Activated CD4-positive, alpha-beta T cell treated with anti-CD3 and anti-CD28 coated beads for 36 hours (primary cell): ENCODE measurements at regions of chr19 and their contacts with region 1.

Region 1: GRCh38 chr19:10251792-10252694 is at the start of gene MRPL4:
- DNase-seq: peak; percentile 97
- ATAC-seq: peak; percentile 99
- H3K4me3 Mint-ChIP-seq: peak within 1 kb of the TSS; percentile 97
- H3K27ac Mint-ChIP-seq: peak within 1 kb of the TSS; percentile 97
- H3K4me1 Mint-ChIP-seq: peaks cover 18% of the 10 kb centered on the region
- H3K27me3 Mint-ChIP-seq: no peaks in the 10 kb centered on the region
- total RNA-seq, gene MRPL4: 130 to 140 TPM

Region 2: DNA sequence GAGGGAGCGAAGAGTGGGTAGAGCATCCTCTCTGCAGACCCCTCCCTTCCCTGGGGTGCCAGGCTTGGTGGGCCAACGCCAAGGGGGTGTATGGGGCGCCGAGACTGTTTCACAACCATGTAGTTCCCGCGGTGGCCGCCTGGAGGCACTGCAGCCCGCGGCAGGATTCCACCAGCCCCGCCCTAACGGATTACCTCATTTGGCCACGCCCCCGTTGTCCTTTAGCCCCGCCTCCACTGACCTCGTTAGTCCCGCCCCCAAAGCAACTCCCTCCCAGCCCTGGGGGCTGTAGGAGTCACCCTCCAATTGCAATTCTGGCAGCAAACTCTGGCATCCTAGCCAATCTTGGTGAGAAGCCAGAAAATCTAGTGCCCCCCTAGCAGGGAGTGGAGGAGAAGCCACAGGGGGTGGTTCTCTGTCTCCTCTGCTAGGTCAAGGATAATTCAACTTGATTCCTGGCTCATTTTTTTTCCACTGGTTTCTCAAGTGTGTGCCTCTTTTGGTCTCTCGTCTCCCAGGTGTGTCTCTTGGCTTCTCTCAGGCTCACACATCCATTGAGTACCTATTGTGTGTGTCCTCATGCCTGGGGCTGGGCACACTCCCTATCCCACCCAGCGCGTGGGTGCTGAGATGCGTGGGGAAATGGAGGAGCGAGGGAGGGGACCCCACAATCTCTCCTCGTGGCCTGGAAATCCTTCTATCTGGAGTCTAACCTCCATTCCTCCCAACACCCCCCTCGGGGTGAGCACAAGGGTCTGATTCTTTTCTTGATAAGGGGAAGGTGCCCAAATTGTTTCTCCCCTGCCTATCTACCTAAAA is 317.7 kb before region 1 on chr19:
- CTCF ChIA-PET with region 1: interaction called, 3 read pairs
- POLR2A ChIA-PET with region 1: no interaction called
- intact Hi-C with region 1: loop called (anchors 1 to 2 kb)
- DNase-seq: peak; percentile 94
- ATAC-seq: peak; percentile 85
- H3K4me3 Mint-ChIP-seq: no peak overlapping the region
- H3K27ac Mint-ChIP-seq: no peak overlapping the region
- H3K4me1 Mint-ChIP-seq: peaks cover 25% of the 10 kb centered on the region
- H3K27me3 Mint-ChIP-seq: peaks cover 43% of the 10 kb centered on the region

Region 3: GRCh38 chr19:10120538-10121189 is 131.4 kb before region 1 on chr19:
- CTCF ChIA-PET with region 1: interaction called, 5 read pairs
- POLR2A ChIA-PET with region 1: interaction called, 4 read pairs
- intact Hi-C with region 1: loop called in 1 of 2 experiments (anchors 1 kb)
- DNase-seq: no peak
- ATAC-seq: no peak
- H3K4me3 Mint-ChIP-seq: no peak overlapping the region
- H3K27ac Mint-ChIP-seq: no peak overlapping the region
- H3K4me1 Mint-ChIP-seq: peaks cover 15% of the 10 kb centered on the region
- H3K27me3 Mint-ChIP-seq: no peaks in the 10 kb centered on the region

Region 4: GRCh38 chr19:10380313-10381102 is 128.5 kb after region 1 on chr19 and contains the start of gene TYK2:
- CTCF ChIA-PET with region 1: no interaction called
- POLR2A ChIA-PET with region 1: interaction called, 8 read pairs
- intact Hi-C with region 1: loop called in 1 of 2 experiments (anchors 1 kb)
- DNase-seq: peak; percentile 97
- ATAC-seq: peak; percentile 99
- H3K4me3 Mint-ChIP-seq: peak within 1 kb of the TSS; percentile 86
- H3K27ac Mint-ChIP-seq: peak within 1 kb of the TSS; percentile 96
- H3K4me1 Mint-ChIP-seq: peaks cover 22% of the 10 kb centered on the region
- H3K27me3 Mint-ChIP-seq: no peaks in the 10 kb centered on the region
- total RNA-seq, gene TYK2: 151 to 197 TPM

Region 5: GRCh38 chr19:11374433-11375142 is 1122.5 kb after region 1 on chr19 and contains the start of gene SWSAP1:
- CTCF ChIA-PET with region 1: no interaction called
- POLR2A ChIA-PET with region 1: no interaction called
- intact Hi-C with region 1: loop called in 1 of 2 experiments (anchors 10 kb)
- DNase-seq: peak; percentile 98
- ATAC-seq: peak; percentile 92
- H3K4me3 Mint-ChIP-seq: no peak within 1 kb of the TSS
- H3K27ac Mint-ChIP-seq: no peak within 1 kb of the TSS
- H3K4me1 Mint-ChIP-seq: peaks cover 28% of the 10 kb centered on the region
- H3K27me3 Mint-ChIP-seq: no peaks in the 10 kb centered on the region
- total RNA-seq, gene SWSAP1: 1.5 to 1.7 TPM